Lower leg skin (tissue), 4 donors: ENCODE measurements at regions of chr3 and their contacts with region 1.

Region 1: DNA sequence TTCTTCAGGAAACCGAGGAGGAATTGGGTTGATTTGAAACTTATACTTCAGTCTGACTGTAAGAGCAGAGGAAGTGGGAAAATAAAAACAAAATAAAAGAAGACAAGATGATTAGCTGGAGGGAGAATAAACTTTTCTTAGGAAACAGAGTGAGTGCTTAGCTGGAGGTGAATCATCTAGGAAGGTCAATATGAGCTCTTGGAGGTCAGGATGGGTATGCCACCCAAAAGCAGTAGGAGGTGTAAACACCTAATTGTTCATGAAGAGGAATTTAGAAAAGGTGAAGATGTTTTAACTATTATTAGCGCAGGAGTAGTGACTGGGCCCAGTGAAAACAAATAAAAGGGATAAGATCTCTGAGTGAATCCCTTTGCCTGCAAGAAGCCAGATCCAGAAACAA is 39.9 kb upstream of the ARL14 start:
- DNase-seq: no peak
- H3K4me3 ChIP-seq: no peak overlapping the region
- CTCF ChIP-seq: no peak
- POLR2A ChIP-seq: no peak

Region 2: GRCh38 chr3:161217496-161217895 is 580.4 kb after region 1 on chr3:
- intact Hi-C with region 1: no loop called
- DNase-seq: no peak
- H3K4me3 ChIP-seq: no peak overlapping the region
- CTCF ChIP-seq: no peak
- POLR2A ChIP-seq: no peak

Region 3: GRCh38 chr3:162103808-162104207 is 1466.7 kb after region 1 on chr3:
- intact Hi-C with region 1: loop called (anchors 5 kb)
- DNase-seq: no peak
- H3K4me3 ChIP-seq: no peak overlapping the region
- CTCF ChIP-seq: no peak
- POLR2A ChIP-seq: no peak